CD8-positive, alpha-beta T cell (primary cell): ENCODE measurements at regions of chr7 and their contacts with region 1.

Region 1: GRCh38 chr7:88111136-88111743 is 108.6 kb downstream of the SRI start:
- DNase-seq: peak in 2 of 9 experiments; percentile 37 to 50
- ATAC-seq: no peak
- H3K4me3 ChIP-seq: no peak overlapping the region
- H3K4me3 Mint-ChIP-seq: no peak overlapping the region
- H3K27ac ChIP-seq: no peak overlapping the region
- H3K27ac Mint-ChIP-seq: no peak overlapping the region
- H3K4me1 ChIP-seq: no peaks in the 10 kb centered on the region
- H3K4me1 Mint-ChIP-seq: no peaks in the 10 kb centered on the region
- H3K27me3 ChIP-seq: no peaks in the 10 kb centered on the region
- H3K27me3 Mint-ChIP-seq: no peaks in the 10 kb centered on the region
- CTCF ChIP-seq: peak; percentile 53

Region 2: GRCh38 chr7:87312215-87312865 is 798.9 kb before region 1 on chr7:
- CTCF ChIA-PET with region 1: no interaction called
- POLR2A ChIA-PET with region 1: no interaction called
- intact Hi-C with region 1: loop called in 1 of 2 experiments (anchors 5 kb)
- DNase-seq: peak; percentile 19 to 76 (median 66)
- ATAC-seq: peak; percentile 98
- H3K4me3 ChIP-seq: no peak overlapping the region
- H3K4me3 Mint-ChIP-seq: no peak overlapping the region
- H3K27ac ChIP-seq: no peak overlapping the region
- H3K27ac Mint-ChIP-seq: no peak overlapping the region
- H3K4me1 ChIP-seq: no peaks in the 10 kb centered on the region
- H3K4me1 Mint-ChIP-seq: peaks cover 7% of the 10 kb centered on the region
- H3K27me3 ChIP-seq: no peaks in the 10 kb centered on the region
- H3K27me3 Mint-ChIP-seq: peaks cover 2% of the 10 kb centered on the region
- CTCF ChIP-seq: peak; percentile 97

Region 3: GRCh38 chr7:87506246-87507180 is 604.7 kb before region 1 on chr7:
- CTCF ChIA-PET with region 1: no interaction called
- POLR2A ChIA-PET with region 1: no interaction called
- intact Hi-C with region 1: loop called in 1 of 2 experiments (anchors 5 kb)
- DNase-seq: peak in 2 of 9 experiments; percentile 8 to 28
- ATAC-seq: no peak
- H3K4me3 ChIP-seq: no peak overlapping the region
- H3K4me3 Mint-ChIP-seq: no peak overlapping the region
- H3K27ac ChIP-seq: no peak overlapping the region
- H3K27ac Mint-ChIP-seq: no peak overlapping the region
- H3K4me1 ChIP-seq: no peaks in the 10 kb centered on the region
- H3K4me1 Mint-ChIP-seq: no peaks in the 10 kb centered on the region
- H3K27me3 ChIP-seq: no peaks in the 10 kb centered on the region
- H3K27me3 Mint-ChIP-seq: no peaks in the 10 kb centered on the region
- CTCF ChIP-seq: no peak

Region 4: GRCh38 chr7:87797798-87798403 is 313.3 kb before region 1 on chr7:
- CTCF ChIA-PET with region 1: interaction called, 3 read pairs
- POLR2A ChIA-PET with region 1: no interaction called
- intact Hi-C with region 1: loop called (anchors 1 to 2 kb)
- DNase-seq: peak in 2 of 9 experiments; percentile 56 to 68
- ATAC-seq: peak; percentile 80
- H3K4me3 ChIP-seq: no peak overlapping the region
- H3K4me3 Mint-ChIP-seq: no peak overlapping the region
- H3K27ac ChIP-seq: no peak overlapping the region
- H3K27ac Mint-ChIP-seq: no peak overlapping the region
- H3K4me1 ChIP-seq: no peaks in the 10 kb centered on the region
- H3K4me1 Mint-ChIP-seq: no peaks in the 10 kb centered on the region
- H3K27me3 ChIP-seq: no peaks in the 10 kb centered on the region
- H3K27me3 Mint-ChIP-seq: peaks cover 6% of the 10 kb centered on the region
- CTCF ChIP-seq: peak; percentile 55

Region 5: GRCh38 chr7:87886875-87887274 is 224.4 kb before region 1 on chr7:
- CTCF ChIA-PET with region 1: no interaction called
- POLR2A ChIA-PET with region 1: no interaction called
- intact Hi-C with region 1: loop called in 1 of 2 experiments (anchors 2 kb)
- DNase-seq: peak in 2 of 9 experiments; percentile 50 to 63
- ATAC-seq: no peak
- H3K4me3 ChIP-seq: no peak overlapping the region
- H3K4me3 Mint-ChIP-seq: no peak overlapping the region
- H3K27ac ChIP-seq: no peak overlapping the region
- H3K27ac Mint-ChIP-seq: no peak overlapping the region
- H3K4me1 ChIP-seq: no peaks in the 10 kb centered on the region
- H3K4me1 Mint-ChIP-seq: peaks cover 9% of the 10 kb centered on the region
- H3K27me3 ChIP-seq: no peaks in the 10 kb centered on the region
- H3K27me3 Mint-ChIP-seq: no peaks in the 10 kb centered on the region
- CTCF ChIP-seq: peak; percentile 72